Activated naive CD4-positive, alpha-beta T cell treated with anti-CD3 and anti-CD28 coated beads for 36 hours (primary cell): ENCODE measurements at regions of chr12 and their contacts with region 1.

Region 1: DNA sequence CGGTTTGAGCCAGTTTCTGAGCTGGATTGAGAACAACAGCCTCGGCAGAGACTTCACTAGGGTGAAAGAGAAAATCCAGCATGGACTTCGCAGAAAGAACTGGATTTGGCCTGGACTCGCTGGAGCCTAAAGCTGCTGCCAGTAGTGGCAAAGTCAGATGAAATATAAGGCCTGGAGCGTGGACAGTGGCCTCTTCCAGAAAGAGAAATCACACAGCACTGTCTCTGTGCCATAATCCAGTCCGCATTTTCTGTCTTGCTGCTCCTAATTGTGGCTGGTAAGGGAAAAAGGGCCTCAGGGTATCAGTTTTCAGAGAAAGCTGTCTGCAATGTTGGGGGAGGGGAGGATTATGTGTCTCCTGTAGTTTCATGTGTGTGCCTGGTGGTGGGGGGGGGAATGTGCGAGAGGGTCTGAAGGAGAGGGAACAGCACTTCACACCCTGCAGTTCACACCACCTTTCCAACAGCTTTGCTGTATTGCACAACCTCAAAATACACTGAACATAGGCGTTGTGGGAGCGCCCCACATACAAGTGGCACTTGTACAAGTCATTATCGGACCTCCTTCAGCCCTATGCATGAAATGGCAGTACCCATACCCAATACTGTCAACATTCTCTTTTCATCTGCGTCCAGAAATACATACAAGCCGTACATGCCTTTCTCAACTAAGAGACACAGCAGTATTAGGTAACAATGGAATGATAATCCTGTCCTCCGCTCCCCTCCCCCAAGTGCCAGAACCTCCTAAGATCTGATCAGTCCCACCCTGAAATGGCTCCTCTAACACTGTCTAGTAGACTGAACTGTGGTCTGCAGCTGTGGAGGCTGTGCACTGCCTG is 107.5 kb upstream of the ATF7IP start:
- DNase-seq: peak; percentile 99
- H3K4me3 Mint-ChIP-seq: peak overlapping the region; percentile 73
- H3K27ac Mint-ChIP-seq: peak overlapping the region; percentile 98
- H3K4me1 Mint-ChIP-seq: peaks cover 53% of the 10 kb centered on the region
- H3K27me3 Mint-ChIP-seq: no peaks in the 10 kb centered on the region

Region 2: DNA sequence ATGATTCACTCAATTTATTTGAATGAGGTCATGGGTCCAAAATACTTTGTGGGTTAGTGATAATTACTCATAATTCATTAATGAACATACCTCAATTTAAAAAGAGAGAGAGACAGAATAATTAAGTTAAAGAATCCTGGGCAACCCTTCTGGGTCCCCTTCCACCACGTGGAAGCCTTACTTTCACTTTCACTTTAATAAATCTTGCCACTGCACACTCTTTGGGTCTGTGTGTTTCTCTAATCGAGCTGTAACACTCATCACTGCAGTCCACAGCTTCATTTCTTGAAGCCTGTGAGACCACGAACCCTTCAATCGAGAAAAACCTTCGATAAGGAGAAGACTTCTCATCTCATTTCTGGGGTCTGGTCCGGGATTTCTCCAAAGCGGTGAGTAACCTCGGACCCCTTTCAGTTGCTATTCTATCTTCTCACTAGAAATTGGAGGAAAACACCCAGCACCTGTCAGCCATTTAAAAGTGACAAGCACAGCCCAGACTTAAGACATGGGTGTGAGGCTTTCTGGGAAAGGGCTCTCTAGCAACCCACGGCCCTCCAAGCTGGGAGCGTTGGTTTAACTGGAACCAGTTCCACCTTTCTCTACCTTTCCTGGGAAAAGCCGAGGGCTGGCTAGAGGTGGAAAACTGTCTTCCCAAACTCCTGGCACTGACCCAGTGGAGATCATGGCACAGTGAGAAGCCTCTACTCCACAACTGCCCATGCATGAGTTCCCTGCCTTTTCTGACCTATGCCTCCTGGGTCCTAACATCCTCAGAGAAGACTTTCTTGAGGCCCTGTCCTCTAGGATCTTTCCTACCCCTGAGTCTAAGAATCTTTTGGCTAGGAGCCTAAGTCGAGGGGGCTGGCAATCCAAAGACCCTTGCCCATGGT is 41.3 kb before region 1 on chr12:
- CTCF ChIA-PET with region 1: interaction called, 5 read pairs
- intact Hi-C with region 1: loop called (anchors 1 kb)
- DNase-seq: no peak
- H3K4me3 Mint-ChIP-seq: no peak overlapping the region
- H3K27ac Mint-ChIP-seq: peak overlapping the region; percentile 70
- H3K4me1 Mint-ChIP-seq: peaks cover 24% of the 10 kb centered on the region
- H3K27me3 Mint-ChIP-seq: no peaks in the 10 kb centered on the region

Region 3: GRCh38 chr12:14384783-14385638 is 127.1 kb after region 1 on chr12:
- CTCF ChIA-PET with region 1: interaction called, 4 read pairs
- intact Hi-C with region 1: loop called (anchors 1 kb)
- DNase-seq: peak; percentile 83
- H3K4me3 Mint-ChIP-seq: peak overlapping the region; percentile 73
- H3K27ac Mint-ChIP-seq: peak overlapping the region; percentile 97
- H3K4me1 Mint-ChIP-seq: peaks cover 63% of the 10 kb centered on the region
- H3K27me3 Mint-ChIP-seq: no peaks in the 10 kb centered on the region

Region 4: DNA sequence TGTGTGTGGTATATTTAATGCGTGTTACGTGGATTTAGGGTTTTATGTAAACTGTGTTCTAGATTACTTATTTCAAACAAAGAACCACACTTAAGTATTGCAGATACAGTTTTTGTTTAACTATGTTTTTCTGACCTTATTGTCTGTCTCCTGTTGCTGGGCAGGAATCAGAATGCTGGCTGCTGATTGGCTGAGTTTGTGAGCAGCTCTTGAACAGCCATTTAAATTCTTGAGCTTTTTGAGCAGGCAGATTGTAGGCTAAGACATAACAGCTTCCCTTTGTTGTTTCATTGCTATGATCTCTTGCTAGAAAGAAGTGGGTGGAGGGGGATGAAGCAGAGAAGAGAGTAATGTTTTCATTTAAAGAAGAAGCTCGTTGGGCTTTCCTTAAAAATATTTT is 159.8 kb after region 1 on chr12:
- CTCF ChIA-PET with region 1: interaction called, 6 read pairs
- intact Hi-C with region 1: loop called (anchors 1 kb)
- DNase-seq: peak; percentile 89
- H3K4me3 Mint-ChIP-seq: peak overlapping the region; percentile 70
- H3K27ac Mint-ChIP-seq: peak overlapping the region; percentile 90
- H3K4me1 Mint-ChIP-seq: peaks cover 59% of the 10 kb centered on the region
- H3K27me3 Mint-ChIP-seq: no peaks in the 10 kb centered on the region

Region 5: DNA sequence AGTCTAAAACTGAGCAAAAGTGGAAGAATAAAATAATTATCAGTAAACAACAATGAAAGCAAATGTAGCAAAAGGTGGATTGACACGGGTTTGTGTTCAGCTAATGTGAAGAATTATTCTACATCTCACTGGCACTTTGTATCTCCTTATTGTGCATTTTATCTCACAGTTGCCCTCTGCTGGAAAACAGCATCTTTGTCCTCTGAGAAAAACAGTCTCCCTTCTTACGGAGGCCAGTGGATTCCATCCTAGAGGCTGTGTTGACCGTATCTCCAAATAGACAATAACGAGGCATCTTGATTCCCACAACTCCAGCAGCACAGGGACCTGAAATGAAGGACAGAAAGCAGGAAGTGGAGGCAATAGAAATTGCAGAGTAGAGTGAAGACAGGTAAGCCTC is 361.0 kb after region 1 on chr12:
- CTCF ChIA-PET with region 1: interaction called, 5 read pairs
- intact Hi-C with region 1: loop called (anchors 1 kb)
- DNase-seq: peak; percentile 25
- H3K4me3 Mint-ChIP-seq: no peak overlapping the region
- H3K27ac Mint-ChIP-seq: no peak overlapping the region
- H3K4me1 Mint-ChIP-seq: peaks cover 2% of the 10 kb centered on the region
- H3K27me3 Mint-ChIP-seq: peaks cover 8% of the 10 kb centered on the region

Region 6: DNA sequence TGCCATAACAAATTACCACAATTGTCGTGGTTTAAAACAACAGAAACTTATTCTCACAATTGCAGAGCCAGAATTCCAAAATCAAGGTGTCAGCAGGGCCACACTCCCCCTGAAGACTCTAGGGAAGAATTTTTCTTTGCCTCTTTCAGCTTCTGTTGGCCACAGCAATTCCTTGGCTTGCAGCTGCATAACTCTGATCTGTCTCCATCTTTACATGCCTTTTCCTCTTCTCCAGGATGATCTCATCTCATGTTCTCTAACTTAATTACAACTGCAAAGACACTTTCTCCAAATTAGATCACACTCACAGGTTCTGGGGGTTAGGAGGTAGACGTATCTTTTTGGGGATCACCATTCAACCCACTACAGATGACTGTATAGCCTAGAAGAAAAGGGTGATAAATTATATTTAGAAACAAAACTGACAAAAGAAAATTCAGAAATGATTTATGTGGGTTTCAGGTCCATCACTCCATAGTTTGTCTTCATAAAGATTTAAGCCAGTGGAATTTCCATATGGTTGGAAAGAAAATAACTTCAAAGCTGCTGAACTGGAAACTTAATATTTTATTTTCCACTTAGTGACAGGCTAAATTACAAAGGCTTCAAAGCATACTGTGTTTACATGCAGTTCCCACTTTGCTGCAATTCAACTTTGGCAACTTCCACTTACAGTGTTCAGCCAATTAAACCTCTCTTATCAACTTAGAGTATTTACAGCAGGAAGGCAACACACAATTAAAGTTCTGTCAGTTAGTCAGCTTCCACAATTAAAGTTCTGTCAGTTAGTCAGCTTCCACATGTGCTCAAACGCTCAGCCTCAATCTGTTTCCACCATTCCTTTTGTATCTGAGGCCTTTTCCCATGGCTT is 1318.0 kb after region 1 on chr12:
- CTCF ChIA-PET with region 1: no interaction called
- intact Hi-C with region 1: loop called (anchors 5 kb)
- DNase-seq: no peak
- H3K4me3 Mint-ChIP-seq: no peak overlapping the region
- H3K27ac Mint-ChIP-seq: peak overlapping the region; percentile 48
- H3K4me1 Mint-ChIP-seq: peaks cover 53% of the 10 kb centered on the region
- H3K27me3 Mint-ChIP-seq: no peaks in the 10 kb centered on the region